ENCODE measurements at regions of chrX and their contacts with region 1.

Region 1: DNA sequence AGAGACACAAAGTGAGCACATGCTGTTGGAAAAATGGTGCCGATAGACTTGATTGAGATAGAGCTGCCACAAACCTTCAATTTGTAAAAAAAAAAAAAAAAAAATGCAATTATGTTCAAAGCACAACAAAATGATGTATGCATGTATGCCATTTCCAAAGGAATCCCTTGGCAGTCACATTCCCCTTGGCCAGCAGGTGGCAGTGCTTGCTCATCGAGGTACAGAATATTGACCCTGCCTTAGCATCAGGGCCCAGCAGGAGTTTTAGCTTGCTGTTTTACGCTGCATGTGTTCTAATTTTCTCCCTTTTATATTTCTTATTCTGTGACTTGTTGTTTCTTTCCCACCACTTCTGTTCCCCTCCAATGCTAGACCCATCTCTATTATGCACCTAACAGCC is 34.5 kb upstream of the CYBB start:
- DNase-seq: peak; percentile 73

Region 2: DNA sequence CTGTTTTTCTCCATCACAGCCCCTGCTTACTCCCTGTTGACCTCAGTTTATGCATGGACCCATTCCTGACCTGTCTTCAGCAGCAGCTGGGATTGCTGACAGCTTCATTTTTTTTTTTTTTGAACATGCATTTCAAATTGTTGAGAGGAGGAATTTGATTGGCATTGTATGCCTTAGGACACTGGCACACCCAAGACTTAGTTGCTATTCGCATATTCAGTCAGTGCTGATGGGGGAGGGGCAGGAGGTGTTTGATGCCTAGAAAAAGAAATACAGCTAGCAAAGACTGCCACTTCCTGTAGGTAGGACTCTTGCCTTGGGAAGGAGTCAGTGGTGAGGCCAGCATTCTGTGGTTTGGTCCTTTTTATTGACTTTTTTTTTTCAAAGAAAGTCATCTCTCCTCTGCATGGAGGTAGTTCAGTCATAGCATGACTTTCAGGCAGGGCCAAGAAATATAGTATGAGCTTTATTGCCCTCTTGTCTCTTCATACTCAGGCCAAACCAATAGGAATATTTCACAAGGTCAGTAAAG is 93.4 kb before region 1 on chrX:
- CTCF ChIA-PET with region 1: no interaction called
- POLR2A ChIA-PET with region 1: no interaction called
- DNase-seq: no peak

Region 3: GRCh38 chrX:37666516-37666915 is 78.8 kb before region 1 on chrX:
- CTCF ChIA-PET with region 1: no interaction called
- POLR2A ChIA-PET with region 1: no interaction called
- DNase-seq: no peak

Region 4: DNA sequence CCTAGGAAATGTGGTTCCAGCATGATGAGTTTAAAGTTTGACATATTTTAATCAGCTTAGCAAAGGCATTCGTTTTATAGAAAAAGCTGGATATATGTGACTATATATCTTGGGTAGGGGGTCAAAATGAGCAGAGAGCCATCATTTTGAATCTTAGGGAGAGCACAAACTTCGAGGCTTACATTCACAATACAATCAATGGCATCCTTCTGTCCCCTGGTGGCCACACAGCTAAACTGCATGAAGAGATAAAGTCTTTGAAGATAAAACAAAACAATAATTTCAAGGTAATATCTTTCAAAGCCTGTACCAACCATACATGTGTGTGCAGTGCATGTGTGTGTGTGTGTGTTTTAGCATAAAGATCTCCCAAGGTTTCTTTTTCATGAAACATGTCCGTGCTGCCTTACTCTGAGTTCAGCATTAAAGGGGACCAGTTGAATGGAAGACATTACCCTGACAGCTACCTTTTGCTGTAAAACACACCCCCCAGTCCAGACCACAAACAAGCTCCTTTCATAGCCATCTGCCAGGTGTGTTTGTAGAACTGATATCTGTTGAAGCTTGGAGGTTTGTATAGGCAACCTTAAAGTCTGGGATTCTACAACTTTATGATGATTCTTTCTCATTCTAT is 80.0 kb after region 1 on chrX:
- CTCF ChIA-PET with region 1: interaction called, 16 read pairs
- POLR2A ChIA-PET with region 1: no interaction called
- DNase-seq: peak; percentile 37

Measured in HEK293T (cell line).